HepG2 (cell line): ENCODE measurements at regions of chr4 and their contacts with region 1.

Region 1: DNA sequence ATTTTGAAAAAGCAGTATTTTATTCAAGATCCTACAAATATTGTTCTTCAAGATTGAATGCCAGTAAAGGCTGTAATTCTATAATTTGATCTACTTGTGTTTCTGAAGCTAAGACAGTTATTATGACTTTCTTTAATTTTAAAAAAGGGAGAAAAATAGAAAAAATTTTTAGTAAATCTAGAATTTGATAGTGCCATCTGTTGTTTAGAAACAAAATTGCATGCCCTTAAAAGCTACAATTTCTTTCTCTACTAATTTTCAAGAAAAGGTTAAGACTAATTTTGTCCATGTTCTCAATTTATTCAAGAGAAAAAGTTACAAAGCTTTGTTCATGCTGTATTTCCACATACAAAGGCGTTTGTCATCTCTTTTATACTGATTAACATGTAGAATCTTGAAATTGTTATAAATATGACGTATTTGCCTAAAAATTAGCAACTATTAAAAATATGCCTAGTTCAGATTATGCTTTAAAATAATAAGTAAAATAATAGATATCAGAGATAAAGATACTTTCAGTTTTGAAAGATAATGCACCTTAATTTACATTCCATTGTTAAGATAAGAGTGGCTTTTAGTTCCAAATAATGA is 25.6 kb upstream of the MMRN1 start:
- DNase-seq: no peak
- ATAC-seq: no peak
- H3K4me3 ChIP-seq: no peak overlapping the region
- H3K27ac ChIP-seq: no peak overlapping the region
- H3K4me1 ChIP-seq: no peaks in the 10 kb centered on the region
- H3K27me3 ChIP-seq: no peaks in the 10 kb centered on the region
- CTCF ChIP-seq: no peak
- EP300 ChIP-seq: no peak
- POLR2A ChIP-seq: no peak
- RAD21 ChIP-seq: no peak

Region 2: DNA sequence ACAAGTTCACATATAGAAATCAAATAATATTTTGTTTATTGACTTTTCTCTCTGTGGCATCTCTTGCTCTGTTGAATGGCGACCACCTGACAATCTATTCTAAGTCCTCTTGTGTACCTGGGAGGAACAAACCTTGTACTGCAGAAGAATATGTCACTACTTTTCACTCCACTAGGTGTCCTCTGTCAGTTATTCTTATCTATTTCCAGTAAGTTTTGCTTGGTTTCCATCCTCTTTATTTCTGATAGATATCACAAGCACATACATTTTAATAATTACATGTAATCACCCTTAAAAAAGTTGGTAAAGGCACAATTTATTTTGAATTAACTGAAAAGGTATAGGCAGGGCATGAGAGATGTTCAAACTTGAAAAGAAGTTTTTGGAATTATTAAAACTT is 270.5 kb before region 1 on chr4:
- CTCF ChIA-PET with region 1: interaction called, 3 read pairs
- POLR2A ChIA-PET with region 1: no interaction called
- in situ Hi-C with region 1: no loop called
- intact Hi-C with region 1: loop called (anchors 1 kb)
- DNase-seq: peak; percentile 15
- ATAC-seq: peak; percentile 69
- H3K4me3 ChIP-seq: no peak overlapping the region
- H3K27ac ChIP-seq: no peak overlapping the region
- H3K4me1 ChIP-seq: no peaks in the 10 kb centered on the region
- H3K27me3 ChIP-seq: no peaks in the 10 kb centered on the region
- CTCF ChIP-seq: peak; percentile 42
- EP300 ChIP-seq: no peak
- POLR2A ChIP-seq: no peak
- RAD21 ChIP-seq: no peak

Region 3: GRCh38 chr4:89640620-89641366 is 228.3 kb before region 1 on chr4:
- CTCF ChIA-PET with region 1: interaction called, 3 read pairs
- POLR2A ChIA-PET with region 1: no interaction called
- in situ Hi-C with region 1: no loop called
- intact Hi-C with region 1: loop called (anchors 1 kb)
- DNase-seq: peak; percentile 80
- ATAC-seq: peak; percentile 99
- H3K4me3 ChIP-seq: peak overlapping the region; percentile 51 to 68 (median 59)
- H3K27ac ChIP-seq: peak overlapping the region; percentile 27
- H3K4me1 ChIP-seq: peaks cover 11% of the 10 kb centered on the region
- H3K27me3 ChIP-seq: no peaks in the 10 kb centered on the region
- CTCF ChIP-seq: peak; percentile 90
- EP300 ChIP-seq: no peak
- POLR2A ChIP-seq: no peak
- RAD21 ChIP-seq: peak; percentile 71

Region 4: DNA sequence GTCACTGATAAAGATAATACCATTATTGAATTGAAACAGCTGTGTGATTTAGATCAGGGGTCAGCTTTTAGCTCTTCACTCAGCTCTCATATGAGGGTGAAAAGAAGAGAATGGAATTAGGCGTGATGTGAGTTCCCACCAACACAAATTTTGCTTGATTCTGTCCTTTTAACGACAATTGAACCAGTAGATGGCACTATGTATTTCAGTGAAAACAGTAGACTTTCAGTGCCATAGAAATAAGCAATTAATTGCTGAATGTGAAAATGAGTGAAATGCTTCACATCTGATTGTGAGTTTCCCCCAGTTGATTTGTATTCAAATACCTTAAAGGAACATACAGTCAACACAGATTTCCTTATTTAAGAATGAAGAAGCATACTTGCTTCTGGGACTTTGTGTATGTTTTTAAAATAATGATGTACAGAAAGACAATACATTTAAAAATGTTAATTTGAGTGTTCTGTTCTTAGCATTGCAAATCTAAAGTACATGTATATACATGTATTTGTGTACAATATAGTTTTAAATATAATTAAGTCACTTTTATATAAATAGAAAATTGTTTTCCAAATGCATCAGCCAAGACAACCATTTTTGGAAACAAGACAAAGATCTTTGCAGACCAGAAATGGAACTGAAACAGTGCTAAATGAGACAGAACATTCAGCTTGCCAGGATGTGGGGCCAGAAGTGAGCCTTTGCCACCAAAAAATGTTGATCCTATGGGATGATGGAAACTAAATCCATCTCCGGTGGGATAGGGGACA is 211.0 kb before region 1 on chr4:
- CTCF ChIA-PET with region 1: interaction called, 8 read pairs
- POLR2A ChIA-PET with region 1: no interaction called
- in situ Hi-C with region 1: loop called (anchors 10 kb)
- intact Hi-C with region 1: loop called (anchors 1 kb)
- DNase-seq: peak; percentile 28
- ATAC-seq: no peak; the same call in 2 of the 3 replicates
- H3K4me3 ChIP-seq: no peak overlapping the region
- H3K27ac ChIP-seq: no peak overlapping the region
- H3K4me1 ChIP-seq: 0 out of 2 replicates have a peak, but pooled peaks cover 4% of the 10 kb centered on the region
- H3K27me3 ChIP-seq: peaks cover 0 to 5% of the 10 kb centered on the region in 2 experiments; a peak in 1 of 5 replicates
- CTCF ChIP-seq: peak; percentile 64
- EP300 ChIP-seq: no peak
- POLR2A ChIP-seq: no peak
- RAD21 ChIP-seq: no peak